Endothelial cell of umbilical vein (primary cell): ENCODE measurements at regions of chr14 and their contacts with region 1.

Region 1: GRCh38 chr14:63437953-63438757 is 105.0 kb downstream of the PPP2R5E start:
- DNase-seq: peak; percentile 94
- H3K4me3 ChIP-seq: no peak overlapping the region
- H3K27ac ChIP-seq: no peak overlapping the region
- H3K4me1 ChIP-seq: peaks cover 12% of the 10 kb centered on the region
- H3K27me3 ChIP-seq: no peaks in the 10 kb centered on the region
- CTCF ChIP-seq: no peak
- POLR2A ChIP-seq: no peak

Region 2: GRCh38 chr14:63448841-63449240 is 10.7 kb after region 1 on chr14:
- CTCF ChIA-PET with region 1: interaction called, 10 read pairs
- POLR2A ChIA-PET with region 1: no interaction called
- dilution Hi-C with region 1: no loop called
- intact Hi-C with region 1: no loop called
- DNase-seq: no peak
- H3K4me3 ChIP-seq: no peak overlapping the region
- H3K27ac ChIP-seq: no peak overlapping the region
- H3K4me1 ChIP-seq: peaks cover 5% of the 10 kb centered on the region
- H3K27me3 ChIP-seq: no peaks in the 10 kb centered on the region
- CTCF ChIP-seq: no peak
- POLR2A ChIP-seq: no peak